Caco-2 (cell line): ENCODE measurements at regions of chr12 and their contacts with region 1.

Region 1: DNA sequence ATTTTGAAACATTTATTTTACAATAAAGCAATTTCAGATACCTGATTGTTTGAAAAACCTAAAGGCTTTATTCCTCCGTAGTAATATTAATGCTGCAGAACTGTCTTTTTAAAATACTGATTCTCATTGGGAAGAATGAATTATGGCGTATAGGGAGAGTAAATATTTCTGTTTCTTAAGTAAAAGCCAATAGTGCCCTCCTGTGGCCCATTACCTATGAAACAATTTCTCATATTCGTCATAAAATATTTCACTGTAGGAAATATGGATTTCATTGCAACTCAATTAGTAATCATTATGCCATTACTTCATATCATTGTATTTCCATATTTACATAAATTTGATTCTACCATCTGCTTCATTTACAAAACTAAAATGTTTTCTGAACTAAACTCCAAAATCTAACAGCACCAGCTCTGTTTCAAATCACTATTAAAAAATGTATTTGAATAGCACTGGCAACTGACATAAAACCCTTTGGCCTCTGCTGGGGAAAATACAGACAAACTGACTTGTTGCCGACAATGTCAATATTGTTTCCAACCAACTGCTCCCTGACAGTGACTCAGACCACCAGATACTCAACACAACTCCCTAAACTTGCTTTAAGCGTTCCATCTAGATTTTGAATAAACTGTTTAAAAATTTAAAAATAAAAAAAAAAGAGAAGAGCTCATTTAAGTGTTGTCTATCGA is 290.3 kb downstream of the NAV3 start:
- DNase-seq: no peak
- H3K4me3 ChIP-seq: no peak overlapping the region
- H3K4me3 Mint-ChIP-seq: no peak overlapping the region
- H3K27ac Mint-ChIP-seq: no peak overlapping the region
- H3K4me1 ChIP-seq: no peaks in the 10 kb centered on the region
- H3K4me1 Mint-ChIP-seq: no peaks in the 10 kb centered on the region
- H3K27me3 ChIP-seq: no peaks in the 10 kb centered on the region
- H3K27me3 Mint-ChIP-seq: no peaks in the 10 kb centered on the region
- CTCF ChIP-seq: peak in 1 of 2 experiments; percentile 37

Region 2: DNA sequence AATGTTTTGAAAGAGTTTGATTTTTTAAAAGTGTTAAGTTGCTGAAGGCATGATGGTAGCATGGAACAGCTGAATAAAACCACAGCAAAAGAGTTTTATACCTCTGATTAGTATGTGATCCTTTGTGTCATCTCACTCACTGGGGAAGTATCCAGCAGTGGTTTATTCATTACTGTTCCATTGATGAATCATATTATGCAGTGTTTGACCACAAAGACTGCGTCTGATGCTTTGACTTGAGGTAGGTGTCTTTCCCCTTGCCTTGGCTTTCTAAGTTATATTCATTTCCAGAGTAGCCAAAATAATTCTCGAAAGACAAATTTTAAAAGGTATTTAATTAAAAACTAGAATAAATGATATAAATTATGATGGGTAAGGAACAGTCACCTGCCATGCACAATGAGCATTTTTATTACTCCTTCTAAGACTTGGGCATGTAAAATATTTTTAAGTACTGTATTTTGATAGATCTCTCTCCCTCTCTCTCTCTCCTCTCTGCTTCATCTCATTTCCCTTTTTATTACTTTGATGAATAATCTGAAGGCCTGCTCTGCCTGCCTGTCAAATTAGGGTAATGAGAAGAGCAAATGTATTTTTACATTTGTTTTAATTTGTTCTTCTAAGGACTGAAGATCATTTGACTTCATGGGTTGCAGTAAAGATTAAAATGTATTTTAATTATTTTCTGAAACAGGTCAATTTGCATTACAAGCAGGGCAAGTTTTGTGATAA is 125.4 kb before region 1 on chr12:
- CTCF ChIA-PET with region 1: no interaction called
- POLR2A ChIA-PET with region 1: no interaction called
- intact Hi-C with region 1: loop called (anchors 1 kb)
- DNase-seq: no peak
- H3K4me3 ChIP-seq: no peak overlapping the region
- H3K4me3 Mint-ChIP-seq: no peak overlapping the region
- H3K27ac Mint-ChIP-seq: no peak overlapping the region
- H3K4me1 ChIP-seq: no peaks in the 10 kb centered on the region
- H3K4me1 Mint-ChIP-seq: no peaks in the 10 kb centered on the region
- H3K27me3 ChIP-seq: no peaks in the 10 kb centered on the region
- H3K27me3 Mint-ChIP-seq: no peaks in the 10 kb centered on the region
- CTCF ChIP-seq: no peak